ENCODE measurements at regions of chr10 and their contacts with region 1.

Region 1: GRCh38 chr10:84147347-84147746 is 8.0 kb downstream of the GHITM start:
- DNase-seq: no peak
- H3K4me3 ChIP-seq: no peak overlapping the region
- H3K4me3 Mint-ChIP-seq: no peak overlapping the region
- H3K27ac ChIP-seq: peak overlapping the region in 1 of 2 donors; percentile 25
- H3K27ac Mint-ChIP-seq: peak overlapping the region in 1 of 7 donors; percentile 0
- H3K4me1 ChIP-seq: no peaks in the 10 kb centered on the region
- H3K4me1 Mint-ChIP-seq: no peaks in the 10 kb centered on the region
- H3K27me3 ChIP-seq: no peaks in the 10 kb centered on the region
- H3K27me3 Mint-ChIP-seq: no peaks in the 10 kb centered on the region
- CTCF ChIP-seq: no peak

Region 2: GRCh38 chr10:84204122-84204521 is 56.8 kb after region 1 on chr10:
- intact Hi-C with region 1: loop called (anchors 1 to 5 kb)
- DNase-seq: no peak
- H3K4me3 ChIP-seq: no peak overlapping the region
- H3K4me3 Mint-ChIP-seq: no peak overlapping the region
- H3K27ac ChIP-seq: no peak overlapping the region
- H3K27ac Mint-ChIP-seq: no peak overlapping the region
- H3K4me1 ChIP-seq: no peaks in the 10 kb centered on the region
- H3K4me1 Mint-ChIP-seq: no peaks in the 10 kb centered on the region
- H3K27me3 ChIP-seq: no peaks in the 10 kb centered on the region
- H3K27me3 Mint-ChIP-seq: peaks cover 0 to 10% (median 4%) of the 10 kb centered on the region in 3 donors
- CTCF ChIP-seq: peak; percentile 34

Measured in CD14-positive monocyte (primary cell).